Activated T-helper 1 cell treated with anti-CD3 and anti-CD28 coated beads, Interleukin-12 subunit alpha, Interleukin-12 subunit beta, Interleukin-2, Interleukin-4 antibody, amounts not matched to agents 30 ng/mL and 10 ng/mL and 1 ng/mL, durations not matched to agents 14 hours and 24 hours and 36 hours (primary cell): ENCODE measurements at regions of chr7 and their contacts with region 1.

Region 1: GRCh38 chr7:36723951-36724664 is at the start of gene AOAH:
- DNase-seq: peak; percentile 78
- H3K4me3 Mint-ChIP-seq: peak within 1 kb of the TSS; percentile 87
- H3K27ac Mint-ChIP-seq: peak within 1 kb of the TSS; percentile 90
- H3K4me1 Mint-ChIP-seq: peaks cover 73% of the 10 kb centered on the region
- H3K27me3 Mint-ChIP-seq: peaks cover 2% of the 10 kb centered on the region
- total RNA-seq, gene AOAH: 12.3 and 14.0 TPM in 2 replicates

Region 2: GRCh38 chr7:36487756-36488336 is 236.3 kb before region 1 on chr7:
- intact Hi-C with region 1: loop called (anchors 5 kb)
- DNase-seq: peak; percentile 26
- H3K4me3 Mint-ChIP-seq: no peak overlapping the region
- H3K27ac Mint-ChIP-seq: no peak overlapping the region
- H3K4me1 Mint-ChIP-seq: peaks cover 5% of the 10 kb centered on the region
- H3K27me3 Mint-ChIP-seq: peaks cover 4% of the 10 kb centered on the region

Region 3: GRCh38 chr7:36686499-36686898 is 37.6 kb before region 1 on chr7:
- intact Hi-C with region 1: loop called (anchors 1 kb)
- DNase-seq: no peak
- H3K4me3 Mint-ChIP-seq: peak overlapping the region; percentile 69
- H3K27ac Mint-ChIP-seq: peak overlapping the region; percentile 91
- H3K4me1 Mint-ChIP-seq: peaks cover 78% of the 10 kb centered on the region
- H3K27me3 Mint-ChIP-seq: no peaks in the 10 kb centered on the region

Region 4: GRCh38 chr7:36784991-36785940 is 61.2 kb after region 1 on chr7:
- intact Hi-C with region 1: loop called (anchors 2 kb)
- DNase-seq: peak; percentile 68
- H3K4me3 Mint-ChIP-seq: peak overlapping the region; percentile 72
- H3K27ac Mint-ChIP-seq: peak overlapping the region; percentile 92
- H3K4me1 Mint-ChIP-seq: peaks cover 74% of the 10 kb centered on the region
- H3K27me3 Mint-ChIP-seq: no peaks in the 10 kb centered on the region

Region 5: DNA sequence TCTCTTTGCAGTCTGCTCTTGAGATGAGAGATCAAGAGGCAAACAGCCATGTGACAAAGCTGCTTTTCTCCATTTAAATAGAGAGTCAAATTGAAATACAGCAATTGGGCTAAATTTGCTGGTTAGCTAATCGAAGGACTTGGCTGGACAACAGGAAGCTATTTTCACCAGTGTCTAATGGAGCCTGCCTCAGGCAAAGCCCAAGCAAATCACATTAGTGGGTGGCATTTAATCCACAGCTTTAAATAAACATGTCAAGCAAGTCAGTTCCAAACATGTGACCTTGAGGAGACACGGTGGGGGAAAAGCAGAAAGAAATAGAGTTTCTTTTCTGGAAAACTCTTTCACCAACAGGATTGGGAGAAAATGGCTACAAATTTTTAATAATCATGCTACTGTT is 180.7 kb after region 1 on chr7:
- intact Hi-C with region 1: no loop called
- DNase-seq: no peak
- H3K4me3 Mint-ChIP-seq: no peak overlapping the region
- H3K27ac Mint-ChIP-seq: no peak overlapping the region
- H3K4me1 Mint-ChIP-seq: peaks cover 9% of the 10 kb centered on the region
- H3K27me3 Mint-ChIP-seq: no peaks in the 10 kb centered on the region

Region 6: DNA sequence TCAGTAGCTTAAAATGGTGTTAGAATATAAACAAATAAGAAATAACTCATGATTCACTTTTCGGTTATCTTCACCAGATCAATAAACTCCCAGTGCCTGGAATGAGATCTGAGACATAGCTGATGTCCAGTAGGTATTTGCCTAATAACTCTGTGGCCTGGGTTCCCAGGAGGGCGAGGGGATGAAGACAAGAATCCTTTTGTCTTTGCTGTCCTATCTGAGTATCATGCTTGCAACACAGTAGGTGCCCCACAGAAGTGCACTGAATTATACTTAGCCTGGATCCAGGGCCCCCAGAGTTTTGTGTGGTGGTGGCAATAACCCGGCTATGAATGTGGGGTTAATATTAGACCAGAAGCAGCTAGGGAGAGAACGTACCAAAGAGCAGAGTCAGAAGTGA is 350.3 kb after region 1 on chr7:
- intact Hi-C with region 1: loop called (anchors 2 kb)
- DNase-seq: no peak
- H3K4me3 Mint-ChIP-seq: no peak overlapping the region
- H3K27ac Mint-ChIP-seq: no peak overlapping the region
- H3K4me1 Mint-ChIP-seq: peaks cover 46% of the 10 kb centered on the region
- H3K27me3 Mint-ChIP-seq: no peaks in the 10 kb centered on the region